ENCODE measurements at regions of chr7 and their contacts with region 1.

Region 1: DNA sequence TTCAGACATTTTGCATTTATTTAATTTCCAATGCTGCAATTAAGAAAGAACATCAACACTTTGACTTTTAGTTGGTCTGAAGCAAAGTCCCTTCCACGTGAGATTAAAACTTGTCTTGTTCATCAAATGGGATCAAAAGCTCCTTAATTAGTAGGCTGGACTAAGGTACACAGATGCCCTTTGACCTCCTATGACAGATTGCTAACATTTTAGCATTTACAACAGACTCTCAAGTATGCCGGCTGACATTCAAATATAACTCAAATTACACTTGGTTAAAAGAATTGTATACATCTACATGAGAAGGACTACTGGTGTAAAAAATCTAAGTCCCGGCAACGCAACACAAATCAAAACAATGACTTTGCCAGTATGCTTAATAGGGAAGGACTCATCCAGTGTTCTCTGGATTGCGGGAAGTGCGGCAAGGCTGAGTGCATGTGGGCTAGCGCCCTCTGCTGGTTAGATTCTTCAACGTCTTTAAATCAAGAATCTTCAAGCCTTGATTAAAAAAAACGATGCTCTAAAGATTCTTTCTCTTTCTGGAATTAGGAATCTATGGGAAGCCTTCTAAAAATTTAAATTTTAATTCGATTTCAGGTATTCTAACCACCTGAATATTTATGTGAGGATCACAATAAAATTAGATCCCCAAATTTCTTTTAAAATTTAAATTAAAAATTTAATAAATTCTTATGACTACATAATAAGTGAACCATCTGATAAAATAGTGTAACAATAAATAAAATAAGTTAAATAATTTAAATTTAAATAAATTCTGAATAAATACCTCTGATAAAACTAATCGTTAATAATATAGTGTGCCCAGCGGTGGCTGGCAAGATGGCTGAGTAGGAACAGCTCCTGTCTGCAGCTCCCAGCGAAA is 444.7 kb downstream of the DGKB start:
- DNase-seq: peak in 4 of 9 donors; percentile 10 to 22 (median 18)
- ATAC-seq: peak; percentile 49
- H3K4me3 ChIP-seq: no peak overlapping the region
- H3K4me3 Mint-ChIP-seq: no peak overlapping the region
- H3K27ac ChIP-seq: no peak overlapping the region
- H3K27ac Mint-ChIP-seq: no peak overlapping the region
- H3K4me1 ChIP-seq: no peaks in the 10 kb centered on the region
- H3K4me1 Mint-ChIP-seq: peaks cover 0 to 4% (median 0%) of the 10 kb centered on the region in 7 donors
- H3K27me3 ChIP-seq: no peaks in the 10 kb centered on the region
- H3K27me3 Mint-ChIP-seq: peaks cover 0 to 4% (median 0%) of the 10 kb centered on the region in 5 donors

Region 2: DNA sequence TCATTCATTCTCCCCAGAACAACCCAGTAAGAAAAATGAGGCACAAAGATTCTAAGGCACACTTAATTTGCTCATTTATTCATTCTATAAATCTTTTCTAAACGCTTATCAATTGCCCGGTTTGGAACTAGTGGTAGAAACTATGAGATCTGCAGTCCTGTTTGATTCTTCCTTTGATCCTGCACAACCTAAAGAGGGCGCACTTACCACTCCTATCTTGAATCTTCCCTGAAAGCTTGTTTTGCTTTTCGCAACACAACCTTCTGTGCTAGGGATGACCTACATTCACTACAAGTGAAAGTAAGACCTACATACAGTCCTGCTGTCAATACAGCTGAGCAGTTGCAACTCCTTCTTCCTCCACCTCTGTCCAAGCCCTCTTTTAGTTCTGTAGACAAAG is 1783.0 kb before region 1 on chr7:
- CTCF ChIA-PET with region 1: no interaction called
- POLR2A ChIA-PET with region 1: no interaction called
- intact Hi-C with region 1: loop called in 1 of 2 experiments (anchors 10 kb)
- DNase-seq: peak in 7 of 9 donors; percentile 31 to 64 (median 50)
- ATAC-seq: peak; percentile 92
- H3K4me3 ChIP-seq: no peak overlapping the region
- H3K4me3 Mint-ChIP-seq: no peak overlapping the region
- H3K27ac ChIP-seq: no peak overlapping the region
- H3K27ac Mint-ChIP-seq: peak overlapping the region in 2 of 9 donors; percentile 0
- H3K4me1 ChIP-seq: peaks cover 0 to 4% of the 10 kb centered on the region in 2 donors
- H3K4me1 Mint-ChIP-seq: peaks cover 7 to 13% (median 9%) of the 10 kb centered on the region in 7 donors
- H3K27me3 ChIP-seq: no peaks in the 10 kb centered on the region
- H3K27me3 Mint-ChIP-seq: peaks cover 0 to 13% (median 0%) of the 10 kb centered on the region in 5 donors

Region 3: DNA sequence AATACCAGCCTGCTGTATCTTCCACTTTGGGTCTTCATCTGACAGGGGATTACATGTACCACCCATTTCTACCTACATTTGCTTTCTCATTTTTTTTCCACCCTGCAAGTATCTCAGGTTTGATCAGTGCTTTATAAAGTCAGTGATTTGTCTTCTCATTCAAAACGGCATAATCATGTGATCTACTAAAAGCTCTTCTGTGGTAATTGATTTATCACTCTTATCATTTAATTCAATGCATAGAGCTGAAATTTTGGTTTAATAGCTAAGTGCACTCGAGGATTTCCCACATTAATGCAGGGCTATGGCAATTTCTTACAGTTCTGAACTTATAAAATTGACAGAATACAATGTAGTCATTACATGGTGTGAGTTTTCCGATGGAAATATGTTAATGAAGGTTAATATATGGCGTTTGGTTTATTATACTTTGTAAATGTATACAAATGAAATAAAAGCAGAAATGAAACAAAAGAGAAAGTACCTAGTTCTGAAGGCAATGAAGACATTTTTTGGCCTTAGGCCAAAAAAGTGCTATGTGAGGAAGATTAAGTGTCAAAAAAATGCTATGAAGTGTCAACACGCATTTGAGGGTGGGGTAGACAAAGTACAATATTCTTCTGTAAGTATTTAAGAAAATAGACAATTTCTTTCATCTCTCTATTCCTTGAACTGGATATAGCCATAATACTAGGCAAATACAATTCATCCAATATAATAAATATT is 925.6 kb before region 1 on chr7:
- CTCF ChIA-PET with region 1: no interaction called
- POLR2A ChIA-PET with region 1: no interaction called
- intact Hi-C with region 1: loop called in 1 of 2 experiments (anchors 5 kb)
- DNase-seq: no peak
- ATAC-seq: no peak
- H3K4me3 ChIP-seq: no peak overlapping the region
- H3K4me3 Mint-ChIP-seq: no peak overlapping the region
- H3K27ac ChIP-seq: no peak overlapping the region
- H3K27ac Mint-ChIP-seq: no peak overlapping the region
- H3K4me1 ChIP-seq: no peaks in the 10 kb centered on the region
- H3K4me1 Mint-ChIP-seq: no peaks in the 10 kb centered on the region
- H3K27me3 ChIP-seq: no peaks in the 10 kb centered on the region
- H3K27me3 Mint-ChIP-seq: no peaks in the 10 kb centered on the region